Ovary (tissue), 10 donors: ENCODE measurements at regions of chr10 and their contacts with region 1.

Region 1: DNA sequence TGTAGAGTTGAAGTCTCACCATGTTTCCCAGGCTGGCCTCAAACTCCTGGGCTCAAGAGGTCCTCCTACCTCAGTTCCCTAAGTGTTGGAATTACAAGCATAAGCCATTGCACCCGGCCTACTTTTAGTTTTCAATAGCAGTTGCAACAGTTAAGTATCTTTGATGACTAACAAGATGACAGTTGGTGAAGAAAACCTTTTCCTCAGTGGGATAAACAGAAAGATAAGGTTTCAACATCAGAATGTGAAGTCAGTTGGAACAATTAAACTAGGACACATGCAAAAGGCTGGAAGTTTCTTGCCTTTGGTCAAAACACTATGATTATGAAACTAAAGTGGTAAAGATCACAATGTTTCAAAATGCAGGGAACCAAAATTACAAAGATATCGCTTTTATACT is 169.2 kb downstream of the ZNF438 start:
- DNase-seq: no peak
- H3K4me3 ChIP-seq: no peak overlapping the region
- H3K27ac ChIP-seq: peak overlapping the region in 1 of 2 donors; percentile 17
- H3K4me1 ChIP-seq: peaks cover 10% of the 10 kb centered on the region
- H3K27me3 ChIP-seq: no peaks in the 10 kb centered on the region
- CTCF ChIP-seq: no peak
- EP300 ChIP-seq: no peak
- POLR2A ChIP-seq: no peak

Region 2: GRCh38 chr10:30818010-30818531 is 44.4 kb before region 1 on chr10:
- intact Hi-C with region 1: loop called in 1 of 4 experiments (anchors 5 kb)
- DNase-seq: peak; percentile 46 to 58 (median 52)
- H3K4me3 ChIP-seq: no peak overlapping the region
- H3K27ac ChIP-seq: peak overlapping the region in 1 of 2 donors; percentile 13
- H3K4me1 ChIP-seq: peaks cover 21% of the 10 kb centered on the region
- H3K27me3 ChIP-seq: no peaks in the 10 kb centered on the region
- CTCF ChIP-seq: no peak
- EP300 ChIP-seq: no peak
- POLR2A ChIP-seq: no peak

Region 3: GRCh38 chr10:30999070-30999712 is 136.7 kb after region 1 on chr10:
- intact Hi-C with region 1: no loop called
- DNase-seq: no peak
- H3K4me3 ChIP-seq: no peak overlapping the region
- H3K27ac ChIP-seq: no peak overlapping the region
- H3K4me1 ChIP-seq: peaks cover 3% of the 10 kb centered on the region
- H3K27me3 ChIP-seq: no peaks in the 10 kb centered on the region
- CTCF ChIP-seq: no peak
- EP300 ChIP-seq: no peak
- POLR2A ChIP-seq: no peak

Region 4: DNA sequence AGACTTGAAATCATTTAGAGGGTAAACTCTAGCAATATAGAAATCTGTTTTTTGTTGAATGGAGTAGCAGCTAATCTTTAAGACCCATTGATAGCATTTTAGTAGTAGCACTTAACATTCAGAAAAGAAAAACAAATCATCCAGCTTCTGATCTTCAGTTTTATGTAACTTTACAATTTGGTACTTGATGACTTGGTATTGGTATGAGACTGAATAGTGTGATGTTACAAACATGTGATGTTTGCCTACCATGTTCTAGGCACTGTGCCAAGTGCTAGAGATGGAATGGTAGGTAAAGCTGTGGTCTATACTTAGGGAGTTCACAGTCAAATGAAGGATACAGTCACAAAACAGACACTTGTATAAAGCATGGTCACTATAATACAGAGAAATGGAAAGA is 477.9 kb after region 1 on chr10:
- intact Hi-C with region 1: loop called in 1 of 4 experiments (anchors 5 kb)
- DNase-seq: no peak
- H3K4me3 ChIP-seq: no peak overlapping the region
- H3K27ac ChIP-seq: no peak overlapping the region
- H3K4me1 ChIP-seq: no peaks in the 10 kb centered on the region
- H3K27me3 ChIP-seq: no peaks in the 10 kb centered on the region
- CTCF ChIP-seq: no peak
- EP300 ChIP-seq: no peak
- POLR2A ChIP-seq: no peak